ENCODE measurements at regions of chr17 and their contacts with region 1.

Region 1: GRCh38 chr17:1399679-1400512 is at the start of gene YWHAE:
- DNase-seq: peak; percentile 91 to 98
- H3K4me3 ChIP-seq: peak within 1 kb of the TSS; percentile 72 to 85
- H3K27ac ChIP-seq: peak within 1 kb of the TSS; percentile 88 to 92
- H3K4me1 ChIP-seq: peaks cover 0 to 21% of the 10 kb centered on the region in 2 donors
- H3K27me3 ChIP-seq: no peaks in the 10 kb centered on the region
- CTCF ChIP-seq: peak in 1 of 3 experiments; percentile 4
- total RNA-seq, gene YWHAE: 261 TPM

Region 2: DNA sequence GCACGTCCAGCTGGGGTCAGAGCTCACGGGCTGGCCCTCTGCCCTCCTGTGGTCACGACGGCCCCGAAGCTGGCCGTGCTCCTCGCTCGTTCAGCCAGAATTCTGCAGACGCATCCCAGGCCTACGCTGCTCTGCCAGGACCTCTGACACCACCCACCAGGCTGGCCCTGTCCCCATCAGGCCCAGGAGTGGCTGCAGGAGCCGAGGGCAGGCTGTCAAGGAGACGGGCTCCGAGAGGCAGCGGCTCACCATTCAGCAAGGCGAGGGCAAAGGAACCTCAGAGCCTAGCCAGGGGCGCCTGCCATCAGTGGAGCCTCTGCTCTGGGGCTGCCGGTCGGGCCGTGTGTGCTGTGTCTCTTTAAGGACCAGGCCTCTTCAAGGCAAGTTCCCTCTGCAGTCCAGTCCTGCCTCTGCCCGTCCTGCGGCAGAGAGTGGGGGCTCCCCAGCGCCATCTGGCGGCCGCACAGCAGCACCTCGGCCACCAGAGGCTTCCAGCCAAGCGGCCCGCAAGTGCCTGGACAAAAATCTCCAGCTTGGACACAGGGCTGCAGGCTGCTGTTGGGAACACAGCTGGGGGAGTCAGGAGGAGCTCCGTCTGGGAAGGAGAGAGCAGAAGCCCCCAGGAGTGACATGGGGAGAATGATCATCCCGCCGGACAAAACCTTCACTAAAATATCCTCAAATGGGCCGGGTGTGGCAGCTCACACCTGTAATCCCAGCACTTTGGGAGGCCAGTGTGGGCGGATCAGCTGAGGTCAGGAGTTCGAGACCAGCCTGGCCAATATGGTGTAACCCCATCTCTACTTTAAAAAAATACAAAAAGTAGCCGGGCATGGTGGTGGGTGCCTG is 212.7 kb before region 1 on chr17:
- intact Hi-C with region 1: loop called (anchors 5 kb)
- DNase-seq: peak in 1 of 2 donors; percentile 92
- H3K4me3 ChIP-seq: peak overlapping the region; percentile 25 to 50
- H3K27ac ChIP-seq: peak overlapping the region; percentile 86 to 91
- H3K4me1 ChIP-seq: peaks cover 15 to 32% of the 10 kb centered on the region in 2 donors
- H3K27me3 ChIP-seq: no peaks in the 10 kb centered on the region
- CTCF ChIP-seq: peak; percentile 97 to 100 (median 99)

Region 3: GRCh38 chr17:1365445-1366039 is 34.4 kb before region 1 on chr17:
- intact Hi-C with region 1: loop called (anchors 2 kb)
- DNase-seq: peak in 1 of 2 donors; percentile 70
- H3K4me3 ChIP-seq: peak overlapping the region; percentile 14 to 24
- H3K27ac ChIP-seq: peak overlapping the region in 1 of 2 donors; percentile 32
- H3K4me1 ChIP-seq: peaks cover 12 to 57% of the 10 kb centered on the region in 2 donors
- H3K27me3 ChIP-seq: no peaks in the 10 kb centered on the region
- CTCF ChIP-seq: peak; percentile 78 to 84 (median 81)